A549 (cell line): ENCODE measurements at regions of chr15 and their contacts with region 1.

Region 1: DNA sequence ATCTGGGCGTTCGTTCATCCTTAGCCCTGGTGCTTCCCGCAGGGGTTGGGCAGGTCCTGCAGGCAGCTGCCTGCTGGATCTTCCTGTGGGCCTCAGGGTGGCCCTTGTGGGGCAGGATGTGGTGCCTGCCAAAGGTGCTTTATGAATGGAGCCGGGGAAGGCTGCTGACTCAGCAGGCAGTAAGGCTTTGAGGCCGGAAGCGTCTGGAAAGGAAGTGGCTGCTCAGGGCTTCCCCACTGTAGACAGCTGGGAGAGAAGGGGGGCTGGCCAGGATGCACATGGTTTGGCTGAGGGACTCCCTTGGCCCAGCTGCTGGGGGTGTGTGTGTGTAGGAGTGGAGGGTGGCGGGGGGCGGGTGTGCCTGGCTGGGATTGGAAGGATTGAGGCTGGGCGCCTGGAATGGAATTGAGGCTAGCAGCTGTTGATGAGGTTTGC is 12.9 kb downstream of the CD276 start:
- DNase-seq: no peak
- ATAC-seq: no peak
- H3K4me3 ChIP-seq: no peak overlapping the region
- H3K27ac ChIP-seq: no peak overlapping the region
- H3K4me1 ChIP-seq: no peaks in the 10 kb centered on the region
- CTCF ChIP-seq: no peak
- EP300 ChIP-seq: no peak
- POLR2A ChIP-seq: no peak
- RAD21 ChIP-seq: no peak

Region 2: DNA sequence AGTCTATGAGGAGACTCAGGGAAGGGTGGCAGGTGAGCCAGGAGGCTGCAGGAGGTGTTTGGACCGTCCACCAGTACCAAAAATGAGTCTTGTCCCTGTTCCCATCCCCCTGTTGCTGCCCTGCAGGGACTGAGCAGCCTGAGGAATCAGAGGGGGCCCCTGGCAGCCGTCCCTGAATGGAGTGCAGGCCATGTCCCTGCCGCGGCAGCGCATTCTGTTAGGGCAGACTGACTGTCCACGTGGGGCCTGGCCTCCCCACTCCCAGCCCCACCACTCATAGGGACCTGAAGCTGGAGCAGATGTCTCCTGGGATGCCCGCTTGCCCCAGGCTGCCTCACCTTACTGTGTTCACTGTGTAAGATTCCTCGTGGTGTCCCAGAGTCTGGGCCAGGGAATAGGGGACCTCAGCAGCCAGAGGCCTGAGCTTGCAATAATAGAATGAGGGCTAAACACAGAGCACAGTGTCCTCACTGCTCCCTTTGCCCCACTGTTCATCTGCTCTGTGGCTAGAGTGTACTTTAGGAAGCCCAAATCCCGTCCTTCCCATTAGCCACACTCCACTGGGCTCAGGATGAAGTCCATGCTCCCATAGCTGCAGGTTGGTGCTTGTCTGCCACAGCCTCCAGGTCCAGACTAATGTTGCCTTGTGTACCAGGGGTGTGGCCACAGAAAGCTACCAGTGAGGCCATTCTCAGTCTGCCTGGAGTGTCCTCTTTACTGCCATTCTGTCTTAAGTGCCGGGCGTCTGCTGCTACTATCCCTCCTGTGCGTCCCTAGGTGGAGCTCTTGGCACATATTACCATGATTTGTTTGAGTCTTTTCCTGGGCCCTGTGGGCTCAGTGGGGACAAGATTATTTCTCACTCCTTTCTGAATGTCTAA is 391.5 kb before region 1 on chr15:
- CTCF ChIA-PET with region 1: interaction called, 53 read pairs
- POLR2A ChIA-PET with region 1: no interaction called
- DNase-seq: peak; percentile 81 to 86
- ATAC-seq: peak; percentile 91 to 95
- H3K4me3 ChIP-seq: no peak overlapping the region
- H3K27ac ChIP-seq: no peak overlapping the region
- H3K4me1 ChIP-seq: no peaks in the 10 kb centered on the region
- CTCF ChIP-seq: peak; percentile 83
- EP300 ChIP-seq: no peak
- POLR2A ChIP-seq: no peak
- RAD21 ChIP-seq: peak; percentile 89 to 95

Region 3: DNA sequence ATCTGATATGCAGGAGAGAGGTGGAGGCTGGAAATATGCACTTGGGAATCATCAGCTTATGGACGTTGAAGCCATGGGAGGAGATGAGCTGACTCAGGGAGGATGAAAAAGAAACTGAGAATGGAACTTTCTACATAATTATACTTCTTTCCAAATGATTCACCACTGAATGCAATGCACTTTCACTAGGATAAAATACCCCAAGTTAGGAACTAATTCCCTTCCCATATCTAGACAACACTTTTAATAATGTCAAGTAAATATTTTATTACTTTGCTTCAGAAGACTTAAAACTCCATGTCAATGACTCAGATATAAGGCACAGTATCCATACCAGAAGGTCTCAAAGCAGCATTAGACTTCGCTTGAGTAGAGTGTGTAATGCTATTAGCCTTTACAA is 88.1 kb before region 1 on chr15:
- CTCF ChIA-PET with region 1: interaction called, 12 read pairs
- POLR2A ChIA-PET with region 1: no interaction called
- DNase-seq: no peak
- ATAC-seq: no peak
- H3K4me3 ChIP-seq: no peak overlapping the region
- H3K27ac ChIP-seq: no peak overlapping the region
- H3K4me1 ChIP-seq: 0 out of 3 replicates have a peak, but pooled peaks cover 3% of the 10 kb centered on the region
- CTCF ChIP-seq: no peak
- EP300 ChIP-seq: no peak
- POLR2A ChIP-seq: no peak
- RAD21 ChIP-seq: no peak

Region 4: DNA sequence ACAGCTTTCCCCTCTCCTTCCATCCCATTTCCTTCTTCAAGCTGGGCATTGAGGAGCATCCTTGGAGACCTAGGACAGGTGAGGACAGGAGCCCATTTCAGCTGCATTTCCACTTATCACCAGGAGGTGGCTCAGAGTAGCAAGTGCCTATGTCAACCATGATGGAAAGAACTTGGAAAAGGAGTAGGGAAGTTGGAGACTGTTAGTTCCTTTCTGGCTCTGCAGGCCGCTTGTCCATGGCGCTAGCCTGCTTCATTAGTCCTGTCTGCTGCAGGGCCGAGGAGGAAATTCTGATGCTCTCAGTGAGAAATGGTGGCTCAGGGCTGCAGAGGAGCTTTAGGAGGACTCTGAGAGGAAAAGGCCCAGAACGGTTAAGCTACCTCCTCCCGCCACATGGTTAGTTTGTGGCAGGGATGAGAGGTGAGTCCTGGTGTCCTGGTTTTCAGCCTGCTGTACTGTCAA is 19.9 kb before region 1 on chr15:
- CTCF ChIA-PET with region 1: interaction called, 82 read pairs
- POLR2A ChIA-PET with region 1: interaction called, 4 read pairs
- DNase-seq: peak; percentile 36 to 61
- ATAC-seq: peak; percentile 80 to 94; a peak in 4 of 6 replicates
- H3K4me3 ChIP-seq: no peak overlapping the region
- H3K27ac ChIP-seq: no peak overlapping the region
- H3K4me1 ChIP-seq: no peaks in the 10 kb centered on the region
- CTCF ChIP-seq: peak; percentile 47
- EP300 ChIP-seq: no peak
- POLR2A ChIP-seq: no peak
- RAD21 ChIP-seq: peak; percentile 36 to 52; a peak in 4 of 5 replicates

Region 5: GRCh38 chr15:73727330-73727976 is 30.4 kb after region 1 on chr15:
- CTCF ChIA-PET with region 1: interaction called, 10 read pairs
- POLR2A ChIA-PET with region 1: no interaction called
- DNase-seq: peak; percentile 11 to 58
- ATAC-seq: peak; percentile 72 to 89
- H3K4me3 ChIP-seq: no peak overlapping the region
- H3K27ac ChIP-seq: no peak overlapping the region; a peak in 1 of 6 replicates
- H3K4me1 ChIP-seq: no peaks in the 10 kb centered on the region; the same call in 2 of the 3 replicates
- CTCF ChIP-seq: no peak
- EP300 ChIP-seq: no peak
- POLR2A ChIP-seq: no peak
- RAD21 ChIP-seq: no peak

Region 6: DNA sequence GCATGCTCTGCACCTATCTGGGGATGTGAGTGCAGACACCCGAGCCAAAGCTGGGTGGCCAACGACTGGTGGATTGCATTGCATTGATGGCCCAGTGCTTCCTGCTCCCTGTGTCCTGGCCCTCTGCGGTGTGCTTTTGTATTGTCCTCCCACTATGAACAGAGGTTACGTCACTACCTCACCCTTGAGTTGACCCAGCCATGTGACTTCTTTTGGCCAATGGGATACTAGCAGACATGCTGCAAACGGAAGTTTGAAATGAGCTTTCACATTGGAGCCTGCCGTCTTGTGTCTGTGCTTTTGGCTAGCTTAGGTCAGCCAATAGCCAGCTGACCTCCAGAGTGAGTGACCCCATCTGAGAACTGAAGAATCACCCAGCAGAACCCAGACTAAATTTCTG is 161.0 kb after region 1 on chr15:
- CTCF ChIA-PET with region 1: no interaction called
- POLR2A ChIA-PET with region 1: no interaction called
- DNase-seq: no peak
- ATAC-seq: no peak
- H3K4me3 ChIP-seq: no peak overlapping the region
- H3K27ac ChIP-seq: no peak overlapping the region
- H3K4me1 ChIP-seq: no peaks in the 10 kb centered on the region
- CTCF ChIP-seq: no peak
- EP300 ChIP-seq: no peak
- POLR2A ChIP-seq: no peak
- RAD21 ChIP-seq: no peak

Region 7: GRCh38 chr15:74307827-74308644 is 611.0 kb after region 1 on chr15:
- CTCF ChIA-PET with region 1: no interaction called
- POLR2A ChIA-PET with region 1: no interaction called
- DNase-seq: peak; percentile 61 to 83
- ATAC-seq: peak; percentile 88 to 94
- H3K4me3 ChIP-seq: no peak overlapping the region
- H3K27ac ChIP-seq: peak overlapping the region in 1 of 2 experiments; percentile 62; a peak in 2 of 6 replicates
- H3K4me1 ChIP-seq: peaks cover 18% of the 10 kb centered on the region
- CTCF ChIP-seq: peak; percentile 67
- EP300 ChIP-seq: no peak
- POLR2A ChIP-seq: no peak
- RAD21 ChIP-seq: peak; percentile 85 to 87